CD4-positive, alpha-beta T cell (primary cell): ENCODE measurements at regions of chr1 and their contacts with region 1.

Region 1: GRCh38 chr1:231866392-231867331 is 240.1 kb downstream of the DISC1 start:
- DNase-seq: peak; percentile 22 to 81 (median 45)
- ATAC-seq: no peak
- H3K4me3 ChIP-seq: no peak overlapping the region
- H3K4me3 Mint-ChIP-seq: no peak overlapping the region
- H3K27ac ChIP-seq: no peak overlapping the region
- H3K27ac Mint-ChIP-seq: peak overlapping the region; percentile 31
- H3K4me1 ChIP-seq: peaks cover 17% of the 10 kb centered on the region
- H3K4me1 Mint-ChIP-seq: peaks cover 66% of the 10 kb centered on the region
- H3K27me3 ChIP-seq: no peaks in the 10 kb centered on the region
- H3K27me3 Mint-ChIP-seq: no peaks in the 10 kb centered on the region
- CTCF ChIP-seq: peak; percentile 98

Region 2: DNA sequence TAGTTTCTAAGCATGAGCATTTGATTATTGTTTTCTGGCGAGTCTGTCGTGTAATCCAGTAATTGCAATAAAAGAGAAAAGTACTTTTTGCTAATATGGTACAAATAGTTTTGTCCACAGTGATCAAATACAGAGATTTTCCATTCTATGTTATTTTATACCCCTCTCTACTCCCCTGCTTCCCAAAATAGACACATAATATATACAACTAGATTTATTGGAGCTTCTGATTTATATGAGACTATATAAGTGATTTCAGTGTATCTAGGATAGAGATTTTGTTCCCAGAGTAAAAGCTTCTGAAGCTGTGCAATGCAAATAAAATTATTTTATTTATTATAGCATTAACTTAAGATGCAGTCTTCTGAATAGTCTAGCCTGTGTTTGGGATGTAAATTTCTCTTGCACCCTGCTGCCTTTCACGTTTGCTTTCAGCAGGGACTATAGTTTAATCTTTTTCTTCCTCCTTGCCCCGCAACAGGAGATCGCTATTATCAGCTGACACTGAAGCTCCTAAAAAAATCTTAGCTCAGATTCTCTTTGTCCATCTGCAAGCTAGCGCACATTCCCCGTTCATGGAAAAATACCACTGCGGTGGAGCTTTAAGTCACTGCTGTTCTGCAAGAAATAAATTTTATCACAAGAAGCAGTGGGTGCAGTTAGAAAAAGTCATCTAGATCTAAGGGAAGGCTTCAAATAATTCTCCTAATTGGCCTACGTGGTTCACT is 33.2 kb after region 1 on chr1:
- CTCF ChIA-PET with region 1: no interaction called
- POLR2A ChIA-PET with region 1: no interaction called
- intact Hi-C with region 1: no loop called
- DNase-seq: no peak
- ATAC-seq: no peak
- H3K4me3 ChIP-seq: no peak overlapping the region
- H3K4me3 Mint-ChIP-seq: no peak overlapping the region
- H3K27ac ChIP-seq: no peak overlapping the region
- H3K27ac Mint-ChIP-seq: no peak overlapping the region
- H3K4me1 ChIP-seq: peaks cover 2% of the 10 kb centered on the region
- H3K4me1 Mint-ChIP-seq: peaks cover 32% of the 10 kb centered on the region
- H3K27me3 ChIP-seq: no peaks in the 10 kb centered on the region
- H3K27me3 Mint-ChIP-seq: no peaks in the 10 kb centered on the region
- CTCF ChIP-seq: no peak

Region 3: DNA sequence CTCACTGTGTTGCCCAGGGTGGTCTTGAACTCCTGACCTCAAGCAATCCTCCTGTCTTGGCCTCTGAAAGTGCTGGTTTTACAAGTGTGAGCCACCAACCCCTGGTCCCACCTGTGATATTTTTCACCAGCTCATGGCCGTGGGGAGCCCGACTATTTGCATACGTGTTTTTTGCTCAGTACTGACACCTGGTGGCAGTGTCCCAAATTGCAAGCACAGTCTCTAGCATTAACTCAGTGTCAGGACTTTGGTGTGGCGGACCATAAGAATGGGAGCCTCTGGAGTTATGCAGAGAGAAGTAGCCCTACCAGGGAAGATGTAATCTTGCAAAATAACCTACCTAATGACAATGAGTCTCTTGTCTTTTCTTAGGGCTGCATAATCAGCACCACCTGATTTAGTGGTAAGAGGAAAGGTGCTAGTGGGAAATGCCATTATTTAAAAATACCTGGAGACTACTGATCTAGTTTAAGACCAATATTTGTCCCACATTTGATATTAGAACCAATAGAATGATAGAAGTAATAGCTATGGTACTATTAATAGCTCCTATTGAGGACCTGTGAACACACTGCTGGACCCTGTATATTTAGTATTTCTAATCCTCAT is 65.3 kb after region 1 on chr1:
- CTCF ChIA-PET with region 1: interaction called, 4 read pairs
- POLR2A ChIA-PET with region 1: no interaction called
- intact Hi-C with region 1: loop called in 1 of 2 experiments (anchors 2 kb)
- DNase-seq: peak in 10 of 14 experiments; percentile 6 to 61 (median 21)
- ATAC-seq: no peak
- H3K4me3 ChIP-seq: no peak overlapping the region
- H3K4me3 Mint-ChIP-seq: no peak overlapping the region
- H3K27ac ChIP-seq: no peak overlapping the region
- H3K27ac Mint-ChIP-seq: no peak overlapping the region
- H3K4me1 ChIP-seq: peaks cover 21% of the 10 kb centered on the region
- H3K4me1 Mint-ChIP-seq: peaks cover 35% of the 10 kb centered on the region
- H3K27me3 ChIP-seq: no peaks in the 10 kb centered on the region
- H3K27me3 Mint-ChIP-seq: no peaks in the 10 kb centered on the region
- CTCF ChIP-seq: peak; percentile 76

Region 4: DNA sequence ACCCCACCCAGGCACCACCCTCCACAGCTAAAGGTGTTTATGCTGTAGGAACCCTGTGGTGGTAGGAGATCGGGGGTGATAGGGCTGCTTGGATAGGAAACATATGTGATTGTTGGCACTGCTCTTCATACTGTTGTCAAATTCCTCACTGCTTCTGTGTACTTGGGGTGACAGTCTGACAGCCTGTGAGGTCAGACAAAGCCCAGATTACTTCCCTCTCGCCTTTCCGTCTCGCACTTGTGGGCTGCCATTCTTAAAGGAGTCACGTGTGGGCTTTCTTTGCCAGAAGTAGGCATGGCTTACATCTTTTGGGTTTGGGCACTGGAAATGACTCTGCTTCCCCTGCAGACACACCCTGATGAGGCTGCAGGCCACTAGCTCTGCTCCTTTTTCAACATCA is 123.7 kb after region 1 on chr1:
- CTCF ChIA-PET with region 1: no interaction called
- POLR2A ChIA-PET with region 1: no interaction called
- intact Hi-C with region 1: no loop called
- DNase-seq: no peak
- ATAC-seq: no peak
- H3K4me3 ChIP-seq: no peak overlapping the region
- H3K4me3 Mint-ChIP-seq: no peak overlapping the region
- H3K27ac ChIP-seq: no peak overlapping the region
- H3K27ac Mint-ChIP-seq: no peak overlapping the region
- H3K4me1 ChIP-seq: no peaks in the 10 kb centered on the region
- H3K4me1 Mint-ChIP-seq: no peaks in the 10 kb centered on the region
- H3K27me3 ChIP-seq: no peaks in the 10 kb centered on the region
- H3K27me3 Mint-ChIP-seq: no peaks in the 10 kb centered on the region
- CTCF ChIP-seq: no peak

Region 5: DNA sequence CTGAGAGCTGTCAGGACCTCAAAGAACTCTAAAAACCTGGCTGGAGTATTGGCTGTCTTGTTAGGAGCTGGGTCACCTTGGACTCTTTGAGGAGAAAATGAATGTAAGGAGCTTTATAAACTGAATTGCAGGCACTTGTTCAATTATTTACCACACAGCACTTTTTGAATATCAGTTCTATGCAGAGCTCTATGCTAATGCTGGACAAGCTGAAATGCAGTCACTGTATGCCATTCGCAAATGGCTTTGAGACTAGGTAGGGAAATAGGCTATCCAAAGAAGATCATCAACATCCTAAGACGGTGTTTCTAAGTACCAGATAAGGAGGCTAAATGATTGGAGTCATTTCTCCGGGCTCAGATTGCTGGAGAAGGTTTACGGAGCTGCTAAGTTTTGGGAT is 429.8 kb after region 1 on chr1:
- CTCF ChIA-PET with region 1: no interaction called
- POLR2A ChIA-PET with region 1: no interaction called
- intact Hi-C with region 1: loop called in 1 of 2 experiments (anchors 5 kb)
- DNase-seq: no peak
- ATAC-seq: no peak
- H3K4me3 ChIP-seq: no peak overlapping the region
- H3K4me3 Mint-ChIP-seq: no peak overlapping the region
- H3K27ac ChIP-seq: no peak overlapping the region
- H3K27ac Mint-ChIP-seq: no peak overlapping the region
- H3K4me1 ChIP-seq: no peaks in the 10 kb centered on the region
- H3K4me1 Mint-ChIP-seq: peaks cover 8% of the 10 kb centered on the region
- H3K27me3 ChIP-seq: no peaks in the 10 kb centered on the region
- H3K27me3 Mint-ChIP-seq: peaks cover 11% of the 10 kb centered on the region
- CTCF ChIP-seq: no peak

Region 6: GRCh38 chr1:232630047-232630893 is 763.6 kb after region 1 on chr1 and contains the start of gene SIPA1L2:
- CTCF ChIA-PET with region 1: interaction called, 5 read pairs
- POLR2A ChIA-PET with region 1: interaction called, 3 read pairs
- intact Hi-C with region 1: loop called (anchors 2 kb)
- DNase-seq: peak; percentile 67 to 93 (median 82)
- ATAC-seq: peak; percentile 89
- H3K4me3 ChIP-seq: peak within 1 kb of the TSS; percentile 71
- H3K4me3 Mint-ChIP-seq: peak within 1 kb of the TSS; percentile 93
- H3K27ac ChIP-seq: no peak within 1 kb of the TSS
- H3K27ac Mint-ChIP-seq: peak within 1 kb of the TSS; percentile 42
- H3K4me1 ChIP-seq: peaks cover 18% of the 10 kb centered on the region
- H3K4me1 Mint-ChIP-seq: peaks cover 29% of the 10 kb centered on the region
- H3K27me3 ChIP-seq: peaks cover 6 to 19% of the 10 kb centered on the region in 2 experiments
- H3K27me3 Mint-ChIP-seq: peaks cover 39% of the 10 kb centered on the region
- CTCF ChIP-seq: peak; percentile 8
- total RNA-seq, gene SIPA1L2: 1.8 to 1.9 TPM

Region 7: DNA sequence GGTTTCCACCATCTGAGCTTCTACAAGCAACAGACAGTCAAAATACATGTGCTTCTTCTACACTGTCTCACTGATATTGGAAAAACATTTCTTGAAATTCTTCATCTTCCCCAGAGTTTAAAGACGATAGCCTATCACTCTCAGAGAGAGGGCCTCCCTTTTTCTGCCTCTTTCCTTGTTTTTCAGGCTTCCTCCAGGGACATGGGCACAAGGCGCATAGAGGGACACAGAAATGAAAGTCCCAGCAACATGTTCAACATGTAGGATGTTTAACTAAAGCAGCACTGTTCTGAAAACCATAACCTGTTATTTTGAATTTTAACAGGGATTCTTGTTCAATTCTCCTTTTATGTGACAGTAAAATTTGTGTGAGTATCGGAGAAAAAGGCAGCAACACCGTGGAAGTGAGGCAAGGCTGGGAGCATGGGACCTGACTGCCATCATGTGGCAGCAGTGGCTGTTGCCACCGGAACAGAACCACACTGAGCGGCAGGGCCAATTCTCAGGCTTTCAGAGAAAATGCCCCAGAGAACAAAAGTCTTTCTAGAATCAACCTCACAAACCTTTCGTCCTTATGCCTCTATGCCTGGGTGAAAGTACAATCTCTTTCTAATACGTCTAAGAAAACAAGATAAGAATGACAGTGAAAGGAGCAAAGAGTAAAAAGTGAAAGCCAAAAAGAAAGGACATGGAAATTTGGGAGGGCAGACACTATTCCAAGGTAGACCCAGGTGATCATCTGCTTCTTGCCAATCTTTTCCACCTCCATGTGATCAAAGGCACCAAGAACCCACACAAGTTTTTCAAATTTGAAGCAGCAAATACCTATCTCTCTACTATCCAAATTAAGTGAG is 1374.4 kb after region 1 on chr1:
- CTCF ChIA-PET with region 1: no interaction called
- POLR2A ChIA-PET with region 1: no interaction called
- intact Hi-C with region 1: loop called in 1 of 2 experiments (anchors 5 kb)
- DNase-seq: peak in 7 of 14 experiments; percentile 2 to 50 (median 5)
- ATAC-seq: no peak
- H3K4me3 ChIP-seq: no peak overlapping the region
- H3K4me3 Mint-ChIP-seq: no peak overlapping the region
- H3K27ac ChIP-seq: no peak overlapping the region
- H3K27ac Mint-ChIP-seq: no peak overlapping the region
- H3K4me1 ChIP-seq: no peaks in the 10 kb centered on the region
- H3K4me1 Mint-ChIP-seq: no peaks in the 10 kb centered on the region
- H3K27me3 ChIP-seq: no peaks in the 10 kb centered on the region
- H3K27me3 Mint-ChIP-seq: no peaks in the 10 kb centered on the region
- CTCF ChIP-seq: peak; percentile 46